ENCODE measurements at regions of chr18 and their contacts with region 1.

Region 1: GRCh38 chr18:2994603-2995432 is 18.1 kb downstream of the LPIN2 start:
- DNase-seq: peak; percentile 50
- ATAC-seq: peak; percentile 67

Region 2: GRCh38 chr18:3010086-3010485 is 15.3 kb after region 1 on chr18:
- intact Hi-C with region 1: loop called (anchors 2 kb)
- DNase-seq: no peak
- ATAC-seq: no peak

Region 3: DNA sequence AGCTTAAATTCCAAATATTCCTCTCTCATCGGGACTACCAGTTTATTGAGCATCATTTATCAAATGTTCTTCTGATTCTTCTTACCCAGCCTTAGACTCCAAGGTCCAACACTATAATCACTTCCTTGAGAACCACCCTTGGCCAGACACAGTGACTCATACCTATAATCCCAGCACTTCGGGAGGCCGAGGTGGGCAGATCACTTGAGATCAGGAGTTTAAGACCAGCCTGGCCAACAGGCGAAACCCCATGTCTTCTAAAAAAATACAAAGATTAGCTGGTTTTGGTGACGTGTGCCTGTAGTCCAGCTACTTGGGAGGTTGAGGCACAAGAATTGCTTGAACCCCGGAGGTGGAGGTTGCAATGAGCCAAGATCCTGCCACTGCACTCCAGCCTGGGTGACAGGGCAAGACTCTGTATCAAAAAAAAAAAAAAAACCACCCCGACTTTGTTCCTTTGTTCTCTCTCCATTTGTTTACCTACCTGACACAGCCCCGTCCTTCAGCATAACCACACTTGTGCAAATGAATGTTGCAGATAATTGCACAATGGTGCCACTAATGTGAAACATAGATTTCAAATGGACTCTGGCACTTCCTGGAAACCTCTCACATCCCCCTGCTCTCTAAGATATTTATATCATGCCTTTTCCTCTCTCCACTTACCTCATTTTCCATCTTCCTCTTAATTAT is 57.0 kb after region 1 on chr18:
- intact Hi-C with region 1: no loop called
- DNase-seq: no peak
- ATAC-seq: no peak

Region 4: DNA sequence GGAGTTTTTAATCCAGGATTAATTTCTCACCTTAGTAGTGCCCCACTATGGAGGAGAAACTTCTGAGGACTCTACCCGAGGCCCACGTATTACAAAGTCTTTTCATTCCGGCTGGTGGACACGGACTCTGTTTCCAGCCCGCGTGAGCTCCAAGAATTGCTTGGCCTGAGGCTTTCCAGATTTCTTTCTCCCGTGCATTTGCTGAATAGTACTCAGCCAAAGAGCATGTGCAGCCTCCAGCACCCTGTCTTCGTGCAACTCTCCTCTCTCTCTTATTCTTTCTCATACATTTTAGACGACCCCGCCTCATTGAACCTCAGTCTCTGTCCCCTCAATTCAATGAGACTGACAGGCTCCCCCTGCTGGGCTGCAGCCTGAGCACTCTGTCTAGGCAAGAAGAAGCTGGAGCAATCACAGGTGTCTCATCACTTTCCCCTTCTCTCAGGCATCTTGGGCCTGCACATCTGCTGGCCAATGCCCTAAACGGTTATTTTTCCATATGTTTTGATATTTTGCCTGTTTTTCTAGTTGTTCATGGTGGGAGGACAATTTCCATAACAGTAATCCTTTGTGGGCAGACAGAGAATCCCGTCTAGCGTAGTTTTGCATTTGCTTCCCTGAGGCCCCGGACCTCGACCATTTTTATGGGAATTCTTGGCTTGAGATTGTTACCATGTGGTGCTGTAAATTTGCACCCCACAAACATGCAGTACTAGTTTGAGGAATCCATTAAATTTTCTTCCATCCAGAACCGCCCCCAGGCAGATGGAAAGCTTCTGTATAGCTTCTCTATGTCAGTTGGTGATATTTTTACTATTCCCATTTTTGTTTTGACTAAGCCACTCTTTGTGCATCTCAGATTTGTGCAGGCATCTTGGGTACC is 68.2 kb after region 1 on chr18:
- intact Hi-C with region 1: loop called (anchors 10 kb)
- DNase-seq: peak; percentile 81
- ATAC-seq: peak; percentile 73

Region 5: DNA sequence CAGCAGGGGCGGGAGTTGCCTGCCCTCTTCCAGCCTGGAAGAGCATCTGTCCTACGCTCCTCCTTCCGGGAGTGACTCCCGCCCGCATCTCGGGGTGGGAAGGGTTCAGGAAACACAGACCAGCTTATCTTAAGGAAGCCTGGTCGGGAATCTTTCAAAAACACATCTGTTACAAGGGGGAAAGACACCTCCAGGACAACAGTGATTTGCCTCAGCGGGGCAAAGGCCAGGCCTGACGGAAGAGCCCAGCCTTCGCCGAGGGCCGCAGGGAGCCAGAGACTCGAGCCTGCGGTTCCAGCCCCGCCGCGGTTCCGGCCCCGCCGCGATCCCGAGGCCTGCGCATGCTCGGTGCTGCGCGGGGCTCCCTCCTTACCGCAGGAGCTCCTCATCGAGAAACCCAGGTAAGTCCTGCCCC is 417.0 kb after region 1 on chr18:
- intact Hi-C with region 1: no loop called
- DNase-seq: peak; percentile 65
- ATAC-seq: peak; percentile 83